ENCODE measurements at regions of chr5 and their contacts with region 1.

Region 1: GRCh38 chr5:32232441-32233219 is 58.5 kb upstream of the GOLPH3 start:
- DNase-seq: peak; percentile 75 to 90
- ATAC-seq: peak; percentile 87

Region 2: DNA sequence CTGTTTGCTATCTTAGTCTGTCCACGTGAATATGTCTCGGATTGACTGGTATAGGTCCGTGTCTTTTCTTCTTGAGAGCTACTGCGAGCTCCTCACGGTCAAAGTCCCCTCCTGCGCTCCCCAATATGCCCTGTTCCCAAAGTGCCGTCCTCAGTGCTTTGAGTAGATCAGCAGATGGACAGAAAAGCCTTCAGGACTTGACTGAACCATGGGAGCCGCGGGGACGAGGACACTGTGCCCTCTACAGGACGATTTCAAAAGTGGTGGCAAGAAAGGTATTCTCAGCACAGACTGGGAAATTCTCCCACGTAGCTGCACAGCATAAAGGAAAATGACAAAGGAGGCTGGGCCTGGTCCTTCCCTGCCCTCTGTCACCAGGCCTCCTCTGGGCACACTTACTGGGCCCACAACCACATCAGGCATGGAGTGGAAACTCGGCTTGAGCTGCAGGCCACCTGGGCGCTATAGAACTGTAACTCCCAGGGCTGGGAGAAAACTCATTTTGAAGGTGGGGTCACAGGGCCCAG is 96.7 kb after region 1 on chr5:
- intact Hi-C with region 1: loop called (anchors 5 to 10 kb)
- DNase-seq: peak; percentile 56 to 71
- ATAC-seq: peak; percentile 66

Region 3: DNA sequence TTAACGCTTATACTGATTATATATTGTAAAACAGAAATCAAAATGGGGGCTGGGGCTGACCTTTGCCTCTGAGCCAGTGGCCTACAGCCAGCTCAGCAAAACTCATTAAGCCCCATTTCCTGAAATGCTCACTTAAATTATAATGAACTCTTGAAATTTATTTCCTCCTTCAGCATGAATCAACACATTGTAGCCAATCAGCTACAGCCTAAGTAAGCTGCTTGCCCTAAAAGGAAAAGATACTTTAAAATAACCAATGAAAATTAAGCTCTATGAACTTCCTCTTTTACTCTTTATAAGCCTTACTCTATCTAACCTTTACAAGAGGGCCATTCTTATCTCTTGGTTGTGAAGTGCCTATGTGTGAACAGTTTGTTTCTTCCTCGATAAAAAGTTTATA is 319.2 kb after region 1 on chr5:
- intact Hi-C with region 1: no loop called
- DNase-seq: no peak
- ATAC-seq: peak; percentile 73

Measured in left colon (tissue), 2 donors.